ENCODE measurements at regions of chr20 and their contacts with region 1.

Region 1: DNA sequence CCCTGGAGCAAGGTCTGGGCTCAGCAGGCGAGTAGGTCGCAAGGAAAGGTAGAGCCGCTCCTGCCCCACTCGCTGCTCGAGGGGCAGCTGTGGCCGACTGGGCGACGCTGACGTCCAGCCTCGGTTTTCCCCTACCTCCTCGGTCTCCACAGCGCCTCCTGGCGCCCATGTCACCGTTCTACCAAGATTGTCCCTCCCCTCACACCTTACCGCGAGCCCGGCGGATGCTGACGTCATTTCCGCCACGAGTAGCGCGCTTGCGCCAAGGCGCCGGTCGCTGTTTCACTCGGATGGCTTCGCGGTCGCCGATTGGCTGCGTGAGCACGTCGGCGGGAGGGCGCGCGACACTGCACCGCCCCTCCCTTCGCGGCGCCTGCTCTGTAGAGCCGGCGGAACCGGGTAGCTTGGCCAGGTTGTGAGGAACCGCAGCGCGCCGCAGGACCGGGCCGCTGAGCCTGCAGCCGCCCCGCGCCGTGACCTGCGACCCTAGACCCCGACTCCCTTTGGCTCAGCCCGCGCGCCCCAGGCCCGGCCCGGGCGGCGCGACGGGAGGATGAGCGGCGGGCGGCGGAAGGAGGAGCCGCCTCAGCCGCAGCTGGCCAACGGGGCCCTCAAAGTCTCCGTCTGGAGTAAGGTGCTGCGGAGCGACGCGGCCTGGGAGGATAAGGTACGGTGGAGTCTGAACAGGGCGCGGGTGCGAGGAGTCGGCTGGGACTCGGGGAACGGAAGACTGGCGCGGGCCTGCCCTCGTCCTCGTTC is at the start of gene RAB5IF:
- DNase-seq: peak; percentile 99 to 100
- ATAC-seq: peak; percentile 98 to 99 (median 98)
- H3K4me3 ChIP-seq: peak within 1 kb of the TSS; percentile 63 to 100 (median 97)
- H3K27ac ChIP-seq: peak within 1 kb of the TSS; percentile 67 to 97 (median 89)
- H3K4me1 ChIP-seq: peaks cover 9 to 45% (median 20%) of the 10 kb centered on the region in 9 donors
- H3K27me3 ChIP-seq: no peaks in the 10 kb centered on the region
- CTCF ChIP-seq: peak; percentile 80 to 99 (median 94)
- total RNA-seq, gene RAB5IF: 42.8 to 73.7 (median 49.2) TPM

Region 2: DNA sequence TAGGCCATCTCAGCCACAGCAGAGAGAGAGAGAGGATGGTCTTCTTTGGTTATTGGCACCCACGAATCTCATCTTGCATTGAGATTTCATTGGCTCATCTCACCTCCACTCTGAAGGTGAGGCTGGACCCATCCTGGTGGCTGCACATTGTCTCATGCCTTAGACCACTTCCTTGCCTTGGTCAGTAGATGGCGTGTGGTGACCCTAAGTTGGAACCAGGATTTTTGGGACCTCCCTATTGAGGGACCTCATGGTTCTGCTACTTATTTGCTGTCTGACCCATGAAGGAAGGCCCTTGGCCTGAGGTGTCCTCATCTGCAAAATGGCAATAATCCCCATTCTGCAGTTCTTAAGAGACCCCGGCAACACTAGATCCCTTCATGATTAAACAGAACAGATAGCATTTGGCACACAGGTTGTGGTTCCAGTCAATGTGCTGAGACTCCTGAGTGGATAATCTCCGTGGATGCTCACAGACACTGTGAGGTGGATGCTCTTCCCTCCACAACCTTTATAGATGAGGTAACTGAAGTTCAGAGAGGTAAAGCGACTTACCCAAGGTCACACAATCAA is 390.8 kb before region 1 on chr20:
- intact Hi-C with region 1: loop called in 3 of 10 experiments (anchors 10 kb)
- DNase-seq: no peak
- ATAC-seq: peak in 4 of 8 donors; percentile 49 to 62 (median 54)
- H3K4me3 ChIP-seq: no peak overlapping the region
- H3K27ac ChIP-seq: no peak overlapping the region
- H3K4me1 ChIP-seq: no peaks in the 10 kb centered on the region
- H3K27me3 ChIP-seq: no peaks in the 10 kb centered on the region
- CTCF ChIP-seq: peak in 8 of 9 donors; percentile 41 to 66 (median 56)

Region 3: DNA sequence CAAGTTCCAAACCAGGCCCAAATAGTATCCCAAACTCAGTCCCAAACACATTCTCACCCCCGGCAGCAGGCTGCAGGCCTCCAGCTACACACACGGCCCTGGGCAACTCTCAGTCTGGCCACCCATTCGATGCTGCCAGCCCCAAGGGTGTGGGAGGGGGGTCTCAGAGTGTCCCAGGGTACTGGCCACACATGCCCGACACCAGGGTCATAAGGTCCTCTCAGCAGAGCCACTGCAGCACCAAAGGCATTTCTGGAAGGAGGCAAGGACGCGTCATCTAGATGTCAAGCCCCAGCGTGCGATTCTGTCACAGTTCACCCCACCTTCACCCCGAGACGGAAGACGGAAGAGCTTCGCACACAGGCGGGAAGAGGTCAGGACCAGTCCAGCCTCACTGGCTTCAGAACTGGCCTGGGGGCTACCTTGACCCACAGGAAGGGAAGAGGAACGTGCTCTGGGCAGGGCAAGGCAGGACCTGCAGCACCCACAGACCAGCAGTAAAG is 54.7 kb before region 1 on chr20:
- intact Hi-C with region 1: loop called in 6 of 10 experiments (anchors 1 to 5 kb)
- DNase-seq: no peak
- ATAC-seq: peak; percentile 35 to 54 (median 46)
- H3K4me3 ChIP-seq: no peak overlapping the region
- H3K27ac ChIP-seq: peak overlapping the region in 9 of 10 donors; percentile 14 to 71 (median 51)
- H3K4me1 ChIP-seq: peaks cover 0 to 52% (median 16%) of the 10 kb centered on the region in 9 donors
- H3K27me3 ChIP-seq: no peaks in the 10 kb centered on the region
- CTCF ChIP-seq: no peak

Region 4: DNA sequence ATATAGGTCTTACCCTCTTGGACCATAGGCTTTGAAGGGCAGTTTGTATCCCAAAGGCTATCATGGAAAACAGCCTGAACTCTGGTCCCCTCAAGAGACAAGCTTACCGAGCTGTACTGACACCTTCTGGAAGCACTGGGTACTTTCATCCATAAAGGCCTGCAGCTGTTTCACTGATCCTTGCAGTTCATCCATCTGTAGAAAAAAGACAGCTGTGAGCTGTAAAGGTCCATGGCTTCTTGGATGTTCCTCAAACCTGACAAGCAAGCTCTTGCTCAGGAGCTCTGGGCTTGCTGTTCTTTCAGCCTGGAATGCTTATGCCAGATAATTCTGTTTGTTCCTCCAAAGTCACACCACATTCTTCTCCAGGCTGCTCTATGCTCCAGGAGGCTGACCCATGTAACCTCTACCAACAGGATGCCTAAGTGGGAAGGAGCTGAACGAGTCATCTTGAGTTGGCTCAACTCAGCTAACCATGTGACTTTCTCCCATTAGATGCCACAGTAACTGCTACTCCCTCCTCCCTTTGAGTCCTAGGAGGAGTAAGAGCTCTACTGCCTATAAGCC is 149.2 kb after region 1 on chr20:
- intact Hi-C with region 1: loop called in 5 of 10 experiments (anchors 5 to 10 kb)
- DNase-seq: peak in 1 of 2 donors; percentile 68
- ATAC-seq: peak; percentile 69 to 89 (median 84)
- H3K4me3 ChIP-seq: no peak overlapping the region
- H3K27ac ChIP-seq: peak overlapping the region in 2 of 10 donors; percentile 20 to 44
- H3K4me1 ChIP-seq: peaks cover 0 to 33% (median 15%) of the 10 kb centered on the region in 9 donors
- H3K27me3 ChIP-seq: no peaks in the 10 kb centered on the region
- CTCF ChIP-seq: peak; percentile 64 to 87 (median 83)

Region 5: GRCh38 chr20:36861875-36862801 is 256.6 kb after region 1 on chr20:
- intact Hi-C with region 1: loop called in 1 of 10 experiments (anchors 10 kb)
- DNase-seq: peak; percentile 82 to 92
- ATAC-seq: peak; percentile 61 to 84 (median 72)
- H3K4me3 ChIP-seq: peak overlapping the region; percentile 46 to 84 (median 73)
- H3K27ac ChIP-seq: peak overlapping the region; percentile 82 to 95 (median 94)
- H3K4me1 ChIP-seq: peaks cover 31 to 64% (median 59%) of the 10 kb centered on the region in 9 donors
- H3K27me3 ChIP-seq: peaks cover 0 to 7% (median 0%) of the 10 kb centered on the region in 7 donors
- CTCF ChIP-seq: no peak